Caco-2 (cell line): ENCODE measurements at regions of chr15 and their contacts with region 1.

Region 1: GRCh38 chr15:77650265-77650664 is 17.6 kb upstream of the LINGO1 start:
- DNase-seq: peak in 1 of 2 experiments; percentile 42
- H3K4me3 ChIP-seq: no peak overlapping the region
- H3K4me3 Mint-ChIP-seq: no peak overlapping the region
- H3K27ac Mint-ChIP-seq: no peak overlapping the region
- H3K4me1 ChIP-seq: no peaks in the 10 kb centered on the region
- H3K4me1 Mint-ChIP-seq: no peaks in the 10 kb centered on the region
- H3K27me3 ChIP-seq: no peaks in the 10 kb centered on the region
- H3K27me3 Mint-ChIP-seq: peaks cover 12% of the 10 kb centered on the region
- CTCF ChIP-seq: peak in 1 of 2 experiments; percentile 30

Region 2: GRCh38 chr15:76614725-76615124 is 1035.5 kb before region 1 on chr15:
- CTCF ChIA-PET with region 1: interaction called, 10 read pairs
- POLR2A ChIA-PET with region 1: no interaction called
- intact Hi-C with region 1: no loop called
- DNase-seq: no peak
- H3K4me3 ChIP-seq: no peak overlapping the region
- H3K4me3 Mint-ChIP-seq: no peak overlapping the region
- H3K27ac Mint-ChIP-seq: no peak overlapping the region
- H3K4me1 ChIP-seq: no peaks in the 10 kb centered on the region
- H3K4me1 Mint-ChIP-seq: no peaks in the 10 kb centered on the region
- H3K27me3 ChIP-seq: no peaks in the 10 kb centered on the region
- H3K27me3 Mint-ChIP-seq: no peaks in the 10 kb centered on the region
- CTCF ChIP-seq: no peak

Region 3: DNA sequence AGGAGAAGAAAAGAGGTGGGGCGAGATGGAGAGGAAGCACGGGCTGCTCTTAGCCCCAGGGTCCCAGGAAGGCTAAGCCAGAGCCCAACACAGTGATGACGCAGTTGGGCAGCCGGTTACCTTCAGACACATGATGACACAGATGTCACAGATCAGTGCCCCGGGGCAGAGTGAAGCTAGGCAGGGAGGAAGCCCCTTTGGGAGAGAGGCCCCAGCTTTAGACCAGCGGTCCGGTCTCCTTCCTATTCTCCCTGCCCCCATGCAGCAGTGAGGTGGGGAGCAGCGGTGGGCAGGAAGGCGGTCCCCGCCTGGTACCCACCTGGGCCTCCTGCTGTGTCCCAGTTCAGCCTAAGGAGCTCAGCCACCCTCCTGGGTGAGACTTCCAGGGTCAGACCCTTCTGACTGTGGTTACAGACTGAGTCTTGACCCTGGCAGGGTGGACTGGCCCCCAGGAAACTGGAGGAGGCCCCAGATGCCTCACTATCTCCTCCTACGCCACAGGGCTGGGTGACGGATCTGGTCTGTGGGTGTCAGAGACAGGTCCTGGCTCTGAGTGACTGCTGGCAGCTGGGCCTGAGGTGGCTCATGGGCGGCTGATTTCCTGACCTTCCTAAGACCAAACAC is 21.2 kb after region 1 on chr15:
- CTCF ChIA-PET with region 1: no interaction called
- POLR2A ChIA-PET with region 1: no interaction called
- intact Hi-C with region 1: no loop called
- DNase-seq: no peak
- H3K4me3 ChIP-seq: no peak overlapping the region
- H3K4me3 Mint-ChIP-seq: no peak overlapping the region
- H3K27ac Mint-ChIP-seq: no peak overlapping the region
- H3K4me1 ChIP-seq: no peaks in the 10 kb centered on the region
- H3K4me1 Mint-ChIP-seq: no peaks in the 10 kb centered on the region
- H3K27me3 ChIP-seq: no peaks in the 10 kb centered on the region; the same call in 1 of the 2 replicates
- H3K27me3 Mint-ChIP-seq: peaks cover 11% of the 10 kb centered on the region
- CTCF ChIP-seq: no peak